Activated CD8-positive, alpha-beta T cell treated with anti-CD3 and anti-CD28 coated beads, Interleukin-2, amount 10 ng/mL, durations not matched to agents 7 days and 5 days (primary cell): ENCODE measurements at regions of chr12 and their contacts with region 1.

Region 1: GRCh38 chr12:93397412-93397811 is 19.7 kb downstream of the NUDT4 start:
- DNase-seq: no peak
- ATAC-seq: no peak
- H3K4me3 Mint-ChIP-seq: no peak overlapping the region
- H3K27ac Mint-ChIP-seq: no peak overlapping the region
- H3K4me1 Mint-ChIP-seq: no peaks in the 10 kb centered on the region
- H3K27me3 Mint-ChIP-seq: no peaks in the 10 kb centered on the region

Region 2: DNA sequence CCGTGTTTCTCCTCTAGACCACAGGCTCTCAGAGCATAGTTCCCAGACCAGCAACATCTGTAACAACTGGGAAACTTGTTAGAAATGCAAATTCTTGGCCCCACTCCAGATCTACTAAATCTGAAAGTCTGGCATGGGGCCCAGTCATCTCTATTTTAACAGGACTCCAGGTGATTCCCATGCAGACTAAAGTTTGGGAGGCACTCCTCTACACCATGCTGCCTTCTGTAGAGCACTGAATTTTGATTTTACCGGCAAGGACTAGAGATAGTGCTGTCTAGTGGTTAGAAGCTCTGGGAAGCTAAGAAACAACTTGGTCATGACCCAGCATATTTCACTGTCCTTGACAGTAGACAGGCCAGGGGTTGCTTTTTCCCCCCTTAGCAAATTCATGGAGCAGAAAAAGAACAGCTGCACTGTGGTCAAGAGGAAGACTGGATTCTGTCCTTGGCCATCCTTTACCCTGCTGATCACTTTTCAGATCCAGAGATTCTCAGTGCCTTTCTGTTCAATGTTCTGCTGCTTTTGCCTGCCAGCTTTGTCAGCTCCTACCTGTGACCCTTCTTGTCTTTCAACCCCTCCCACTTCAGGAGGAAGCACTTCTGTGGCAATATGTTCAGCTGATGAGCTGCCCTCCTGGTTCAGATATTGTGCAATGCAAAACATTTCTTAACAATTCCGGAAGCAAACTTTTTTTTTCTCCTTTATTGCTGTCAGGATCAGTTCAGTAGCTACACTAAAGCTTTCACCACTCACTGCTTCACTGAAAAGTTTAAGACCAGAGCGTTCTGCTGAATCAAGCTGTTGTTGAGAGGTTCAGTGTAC is 153.5 kb before region 1 on chr12:
- CTCF ChIA-PET with region 1: interaction called, 16 read pairs
- POLR2A ChIA-PET with region 1: no interaction called
- DNase-seq: peak; percentile 49
- ATAC-seq: peak; percentile 16
- H3K4me3 Mint-ChIP-seq: peak overlapping the region; percentile 51
- H3K27ac Mint-ChIP-seq: peak overlapping the region; percentile 81
- H3K4me1 Mint-ChIP-seq: peaks cover 52% of the 10 kb centered on the region
- H3K27me3 Mint-ChIP-seq: no peaks in the 10 kb centered on the region

Region 3: DNA sequence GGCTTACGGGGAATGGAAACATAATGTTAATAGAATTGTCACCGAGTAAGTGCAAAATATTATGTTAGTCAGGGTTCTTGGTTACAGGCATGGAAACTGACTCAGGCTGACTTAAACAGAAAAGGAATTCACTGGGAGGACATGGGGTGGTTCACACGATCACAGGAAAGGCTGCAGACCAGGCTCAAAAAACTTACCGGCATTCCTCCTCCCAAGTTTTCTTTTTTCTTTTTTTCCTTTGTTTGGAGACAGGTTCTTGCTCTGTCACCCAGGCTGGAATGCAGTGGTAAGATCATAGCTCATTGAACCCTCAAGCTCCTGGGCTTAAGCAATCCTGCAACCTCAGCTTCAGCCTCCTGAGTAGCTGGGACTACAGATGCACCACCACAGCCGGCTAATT is 56.2 kb after region 1 on chr12:
- CTCF ChIA-PET with region 1: no interaction called
- POLR2A ChIA-PET with region 1: no interaction called
- DNase-seq: no peak
- ATAC-seq: no peak
- H3K4me3 Mint-ChIP-seq: no peak overlapping the region
- H3K27ac Mint-ChIP-seq: no peak overlapping the region
- H3K4me1 Mint-ChIP-seq: peaks cover 7% of the 10 kb centered on the region
- H3K27me3 Mint-ChIP-seq: peaks cover 11% of the 10 kb centered on the region